HEK293 (cell line): ENCODE measurements at regions of chr5 and their contacts with region 1.

Region 1: DNA sequence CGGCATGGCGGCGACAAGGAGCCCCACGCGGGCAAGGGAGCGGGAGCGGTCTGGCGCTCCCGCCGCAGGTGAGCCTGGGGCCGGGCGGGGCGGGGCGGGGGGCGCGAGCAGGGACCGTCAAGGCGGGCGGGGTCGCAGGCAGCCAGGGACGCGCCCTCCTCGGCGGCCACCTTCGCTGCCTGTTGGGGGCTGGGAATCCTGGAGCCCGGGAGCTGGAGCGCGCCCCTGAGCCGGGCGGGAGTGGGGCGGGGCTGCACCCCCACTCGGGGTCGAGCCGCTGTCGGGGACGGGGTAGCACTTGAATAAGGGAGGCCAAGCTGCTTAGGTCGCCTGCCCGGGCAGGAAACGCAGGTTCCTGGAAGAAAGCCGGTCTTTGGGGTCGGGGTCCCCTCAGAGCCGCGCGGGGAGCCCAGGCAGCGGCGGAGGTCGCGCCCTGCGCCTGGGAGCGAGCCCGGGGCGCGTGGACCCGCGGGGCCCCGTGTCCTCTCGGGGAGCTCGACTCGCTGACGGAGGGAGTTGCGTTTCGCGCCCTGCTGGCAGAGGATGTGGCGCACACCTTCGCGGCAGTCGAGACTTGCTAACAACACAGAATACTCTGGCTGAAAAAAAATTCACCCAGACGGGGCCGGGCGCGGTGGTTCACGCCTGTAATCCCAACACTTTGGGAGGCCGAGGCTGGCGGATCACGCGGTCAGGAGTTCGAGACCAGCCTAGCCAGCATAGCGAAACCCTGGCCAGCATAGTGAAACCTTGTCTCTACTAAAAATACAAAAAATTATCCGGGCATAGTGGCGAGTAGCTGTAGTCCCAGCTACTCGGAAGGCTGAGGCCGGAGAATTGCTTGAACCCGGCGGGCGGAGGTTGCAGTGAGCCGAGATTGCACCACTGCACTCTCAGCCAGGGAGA is 552 bp downstream of the OTULINL start:
- H3K4me3 ChIP-seq: peak overlapping the region; percentile 70
- H3K27ac ChIP-seq: peak overlapping the region; percentile 77
- H3K4me1 ChIP-seq: peaks cover 13% of the 10 kb centered on the region
- CTCF ChIP-seq: no peak

Region 2: DNA sequence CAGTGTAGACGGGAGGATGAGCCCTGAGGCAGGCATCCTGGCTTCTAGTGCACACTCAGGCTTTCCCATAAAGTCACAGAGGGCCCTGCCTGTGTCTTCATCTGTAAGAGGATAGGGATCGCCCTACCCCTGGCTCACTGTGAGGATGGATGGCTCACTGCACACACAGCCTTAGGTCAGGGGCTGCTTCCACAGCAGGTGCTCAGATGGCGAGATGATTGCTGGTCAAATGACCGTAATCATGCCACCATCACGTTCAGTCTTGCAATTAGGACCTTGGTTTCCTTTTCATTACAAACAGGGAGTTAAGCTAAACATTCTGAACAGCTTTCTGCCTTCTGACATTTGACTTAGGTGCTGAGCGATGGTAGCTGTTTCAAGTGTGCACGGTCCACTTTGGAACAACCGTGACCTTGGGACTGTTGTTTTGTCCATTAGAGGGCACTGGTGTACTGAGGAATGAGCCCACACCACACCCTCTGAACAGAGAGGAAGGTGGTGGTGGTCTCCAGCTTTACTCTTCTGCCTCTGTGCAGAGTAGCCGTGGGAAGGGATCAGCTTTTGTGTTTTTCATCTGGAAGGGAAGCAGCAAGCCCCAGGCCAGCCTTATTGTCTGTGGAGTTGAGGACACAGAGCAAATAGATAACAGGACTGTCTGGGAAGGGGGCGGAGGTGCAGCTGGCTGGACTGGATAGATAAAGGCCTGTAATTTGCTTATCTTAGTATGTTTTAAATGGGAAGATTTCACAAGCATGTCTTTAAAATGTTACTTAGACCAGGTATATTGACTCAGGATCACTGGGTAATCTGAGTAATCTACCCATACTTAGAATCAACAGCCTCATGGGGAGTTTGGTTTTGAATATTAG is 255.9 kb before region 1 on chr5:
- CTCF ChIA-PET with region 1: no interaction called
- POLR2A ChIA-PET with region 1: interaction called, 11 read pairs
- H3K4me3 ChIP-seq: no peak overlapping the region
- H3K27ac ChIP-seq: no peak overlapping the region
- H3K4me1 ChIP-seq: no peaks in the 10 kb centered on the region
- CTCF ChIP-seq: no peak

Region 3: GRCh38 chr5:16051246-16051755 is 1469.2 kb after region 1 on chr5:
- CTCF ChIA-PET with region 1: no interaction called
- POLR2A ChIA-PET with region 1: interaction called, 10 read pairs
- H3K4me3 ChIP-seq: no peak overlapping the region
- H3K27ac ChIP-seq: no peak overlapping the region
- H3K4me1 ChIP-seq: no peaks in the 10 kb centered on the region
- CTCF ChIP-seq: no peak